BJ (cell line): ENCODE measurements at regions of chr6 and their contacts with region 1.

Region 1: GRCh38 chr6:139369568-139370282 is 4.7 kb downstream of the CITED2 start:
- DNase-seq: peak; percentile 68
- H3K4me3 ChIP-seq: no peak overlapping the region
- H3K27me3 ChIP-seq: no peaks in the 10 kb centered on the region
- CTCF ChIP-seq: peak; percentile 53

Region 2: GRCh38 chr6:139296927-139297326 is 72.8 kb before region 1 on chr6:
- CTCF ChIA-PET with region 1: no interaction called
- POLR2A ChIA-PET with region 1: no interaction called
- DNase-seq: no peak
- H3K4me3 ChIP-seq: no peak overlapping the region
- H3K27me3 ChIP-seq: no peaks in the 10 kb centered on the region
- CTCF ChIP-seq: no peak

Region 3: DNA sequence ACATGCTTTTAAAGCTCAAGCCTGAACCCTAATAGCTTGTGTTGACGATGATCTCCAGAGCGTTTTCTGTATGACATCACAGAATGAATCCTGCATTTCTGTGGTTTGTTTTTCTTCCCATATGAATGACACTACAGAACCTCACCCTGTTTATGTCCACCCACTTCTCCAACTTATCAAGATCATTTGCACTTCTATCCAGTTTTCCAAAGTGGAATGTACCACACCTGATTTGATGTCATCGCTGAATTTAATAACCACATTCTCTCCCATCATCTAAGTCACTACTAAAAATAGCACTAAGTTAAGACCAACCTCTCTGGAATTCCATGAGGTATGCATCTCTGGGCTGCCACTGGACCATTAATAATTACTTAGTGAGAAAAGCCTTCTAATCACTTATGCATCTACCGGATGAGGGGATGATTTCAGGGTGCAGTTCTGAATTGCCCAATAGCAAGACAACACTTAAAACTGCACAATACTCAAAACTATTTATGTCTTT is 38.0 kb after region 1 on chr6:
- CTCF ChIA-PET with region 1: no interaction called
- POLR2A ChIA-PET with region 1: interaction called, 27 read pairs
- DNase-seq: peak; percentile 100
- H3K4me3 ChIP-seq: no peak overlapping the region
- H3K27me3 ChIP-seq: no peaks in the 10 kb centered on the region
- CTCF ChIP-seq: no peak

Region 4: DNA sequence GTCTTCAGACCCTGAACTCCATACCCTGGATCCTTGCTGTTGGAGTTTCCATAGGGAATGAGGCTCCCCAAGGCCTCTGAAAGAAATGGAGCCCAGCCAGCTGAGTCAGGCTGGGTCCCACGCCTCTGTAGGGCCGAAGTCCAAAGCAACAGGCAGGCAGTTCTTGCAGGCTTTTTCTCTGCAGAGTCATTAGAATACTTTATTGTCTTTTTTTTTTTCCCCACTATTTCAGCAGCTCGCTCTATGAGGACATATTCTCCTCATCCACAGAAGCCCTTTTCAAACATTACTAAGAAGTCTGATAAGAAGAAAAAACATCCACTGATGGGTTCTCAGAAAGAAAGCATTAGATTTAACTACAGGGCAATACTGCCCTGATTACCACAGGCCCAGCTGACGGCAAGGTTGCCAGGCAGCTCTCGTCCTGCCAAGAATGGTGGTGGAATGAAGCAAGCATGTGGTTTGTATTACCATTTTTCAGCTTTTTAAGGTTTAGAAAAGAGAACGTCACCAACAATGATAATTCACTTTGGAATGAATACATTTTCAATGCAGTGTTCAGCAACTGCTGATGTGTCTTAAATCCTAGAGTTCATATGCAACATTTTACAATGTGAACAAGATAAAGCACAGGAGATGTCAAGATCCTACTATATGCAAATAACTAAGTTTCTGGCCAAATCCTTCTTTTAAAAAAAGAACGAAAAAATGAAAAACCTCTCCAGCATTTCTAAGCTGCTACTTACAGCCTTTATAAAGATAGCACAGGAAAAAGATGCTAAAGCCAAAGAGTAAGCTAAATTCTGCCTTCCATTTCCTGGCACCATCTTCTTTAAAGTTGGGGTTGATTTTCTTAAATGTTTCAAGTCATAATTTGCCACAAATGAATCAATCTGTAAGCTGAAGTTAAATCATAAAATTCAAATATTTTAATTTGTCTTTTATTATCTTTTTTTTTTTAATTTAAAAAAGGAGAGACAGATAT is 228.3 kb after region 1 on chr6:
- CTCF ChIA-PET with region 1: no interaction called
- POLR2A ChIA-PET with region 1: interaction called, 24 read pairs
- DNase-seq: peak; percentile 98
- H3K4me3 ChIP-seq: no peak overlapping the region
- H3K27me3 ChIP-seq: no peaks in the 10 kb centered on the region
- CTCF ChIP-seq: no peak

Region 5: DNA sequence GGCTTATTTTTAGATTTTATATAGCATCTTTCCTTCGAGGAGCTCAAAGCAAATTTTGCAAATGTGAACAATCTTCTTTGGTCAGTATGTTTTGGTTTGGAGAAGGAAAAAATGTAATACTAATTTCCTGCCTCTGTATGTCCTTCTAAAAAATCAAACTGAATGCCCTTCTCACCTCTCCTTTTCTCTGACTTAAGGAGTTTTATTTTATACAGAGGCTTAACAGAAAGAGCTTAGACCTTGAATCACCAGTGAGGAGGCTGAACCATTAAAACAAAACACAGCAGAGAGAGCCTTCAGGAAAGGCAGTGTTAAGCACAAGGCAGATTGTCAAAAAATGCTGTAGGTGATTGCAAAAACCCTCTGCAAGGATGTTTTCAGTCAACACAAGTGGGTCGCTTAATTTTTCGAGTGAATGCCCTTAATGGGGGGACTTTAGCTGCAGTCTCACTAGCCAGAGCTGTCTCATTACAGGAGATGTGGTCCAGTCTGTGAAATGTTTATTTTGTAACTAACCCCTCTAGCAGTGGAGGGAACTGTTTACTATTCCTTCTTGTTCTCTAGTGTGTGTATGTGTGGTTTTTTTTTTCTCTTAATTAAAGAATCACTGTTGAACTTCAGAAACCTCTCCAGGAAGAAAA is 486.1 kb after region 1 on chr6:
- CTCF ChIA-PET with region 1: interaction called, 6 read pairs
- POLR2A ChIA-PET with region 1: interaction called, 19 read pairs
- DNase-seq: peak; percentile 52
- H3K4me3 ChIP-seq: no peak overlapping the region
- H3K27me3 ChIP-seq: no peaks in the 10 kb centered on the region
- CTCF ChIP-seq: no peak